ENCODE measurements at regions of chr21 and their contacts with region 1.

Region 1: GRCh38 chr21:37419228-37419906 is 52.8 kb downstream of the DYRK1A start:
- H3K4me3 ChIP-seq: no peak overlapping the region
- H3K27ac ChIP-seq: no peak overlapping the region
- H3K4me1 ChIP-seq: peaks cover 31% of the 10 kb centered on the region
- CTCF ChIP-seq: no peak

Region 2: GRCh38 chr21:37300114-37300746 is 119.1 kb before region 1 on chr21:
- CTCF ChIA-PET with region 1: no interaction called
- POLR2A ChIA-PET with region 1: no interaction called
- H3K4me3 ChIP-seq: no peak overlapping the region
- H3K27ac ChIP-seq: no peak overlapping the region
- H3K4me1 ChIP-seq: no peaks in the 10 kb centered on the region
- CTCF ChIP-seq: no peak

Region 3: GRCh38 chr21:37396855-37397254 is 22.5 kb before region 1 on chr21:
- CTCF ChIA-PET with region 1: no interaction called
- POLR2A ChIA-PET with region 1: no interaction called
- H3K4me3 ChIP-seq: no peak overlapping the region
- H3K27ac ChIP-seq: no peak overlapping the region
- H3K4me1 ChIP-seq: peaks cover 14% of the 10 kb centered on the region
- CTCF ChIP-seq: no peak

Region 4: DNA sequence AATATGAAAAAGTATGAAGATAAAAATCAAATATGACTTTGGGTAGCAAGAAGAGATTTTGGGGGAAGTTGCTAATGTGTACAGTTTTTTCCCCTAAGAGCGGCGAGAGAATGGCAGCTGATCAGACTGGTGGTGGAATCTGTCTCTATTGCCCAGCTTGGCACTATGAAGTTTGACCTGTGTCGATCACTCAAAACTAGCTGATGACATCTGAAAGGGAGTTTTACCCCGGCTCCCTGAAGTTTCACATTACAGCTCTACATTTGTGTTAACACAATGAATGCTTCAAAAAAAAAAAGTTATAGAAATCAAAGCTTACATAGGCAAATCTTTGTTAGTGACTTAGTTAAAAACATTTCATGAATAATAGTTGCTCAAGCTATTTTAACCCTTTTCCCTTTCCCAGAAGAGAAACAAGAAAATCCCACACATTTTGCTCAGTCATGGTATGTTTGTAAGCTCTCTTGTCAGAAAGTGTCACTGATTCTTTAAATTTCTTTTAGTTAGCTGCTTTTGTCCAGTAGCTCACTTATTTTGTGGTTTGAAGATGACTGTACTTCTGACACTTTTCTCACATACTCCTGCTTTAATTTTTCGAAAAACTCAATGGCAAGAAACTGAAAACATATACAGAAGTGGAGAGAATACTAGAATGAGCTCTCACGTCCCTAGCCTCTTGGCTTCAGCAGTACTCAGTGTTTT is 11.5 kb before region 1 on chr21:
- CTCF ChIA-PET with region 1: interaction called, 12 read pairs
- POLR2A ChIA-PET with region 1: interaction called, 3 read pairs
- H3K4me3 ChIP-seq: no peak overlapping the region
- H3K27ac ChIP-seq: no peak overlapping the region
- H3K4me1 ChIP-seq: peaks cover 12% of the 10 kb centered on the region
- CTCF ChIP-seq: no peak